CD8-positive, alpha-beta T cell (primary cell): ENCODE measurements at regions of chr4 and their contacts with region 1.

Region 1: GRCh38 chr4:30002345-30002744 is 717.8 kb upstream of the PCDH7 start:
- DNase-seq: no peak
- ATAC-seq: no peak
- H3K4me3 ChIP-seq: no peak overlapping the region
- H3K4me3 Mint-ChIP-seq: no peak overlapping the region
- H3K27ac ChIP-seq: no peak overlapping the region
- H3K27ac Mint-ChIP-seq: no peak overlapping the region
- H3K4me1 ChIP-seq: no peaks in the 10 kb centered on the region
- H3K4me1 Mint-ChIP-seq: no peaks in the 10 kb centered on the region
- H3K27me3 ChIP-seq: no peaks in the 10 kb centered on the region
- H3K27me3 Mint-ChIP-seq: no peaks in the 10 kb centered on the region
- CTCF ChIP-seq: no peak

Region 2: GRCh38 chr4:28232951-28233350 is 1769.4 kb before region 1 on chr4:
- CTCF ChIA-PET with region 1: no interaction called
- POLR2A ChIA-PET with region 1: no interaction called
- intact Hi-C with region 1: loop called in 1 of 2 experiments (anchors 5 kb)
- DNase-seq: no peak
- ATAC-seq: no peak
- H3K4me3 ChIP-seq: no peak overlapping the region
- H3K4me3 Mint-ChIP-seq: no peak overlapping the region
- H3K27ac ChIP-seq: no peak overlapping the region
- H3K27ac Mint-ChIP-seq: no peak overlapping the region
- H3K4me1 ChIP-seq: no peaks in the 10 kb centered on the region
- H3K4me1 Mint-ChIP-seq: no peaks in the 10 kb centered on the region
- H3K27me3 ChIP-seq: no peaks in the 10 kb centered on the region
- H3K27me3 Mint-ChIP-seq: no peaks in the 10 kb centered on the region
- CTCF ChIP-seq: no peak

Region 3: GRCh38 chr4:29861307-29861706 is 141.0 kb before region 1 on chr4:
- CTCF ChIA-PET with region 1: no interaction called
- POLR2A ChIA-PET with region 1: no interaction called
- intact Hi-C with region 1: no loop called
- DNase-seq: no peak
- ATAC-seq: no peak
- H3K4me3 ChIP-seq: no peak overlapping the region
- H3K4me3 Mint-ChIP-seq: no peak overlapping the region
- H3K27ac ChIP-seq: no peak overlapping the region
- H3K27ac Mint-ChIP-seq: no peak overlapping the region
- H3K4me1 ChIP-seq: no peaks in the 10 kb centered on the region
- H3K4me1 Mint-ChIP-seq: no peaks in the 10 kb centered on the region
- H3K27me3 ChIP-seq: no peaks in the 10 kb centered on the region
- H3K27me3 Mint-ChIP-seq: no peaks in the 10 kb centered on the region
- CTCF ChIP-seq: no peak

Region 4: GRCh38 chr4:30208741-30209435 is 206.5 kb after region 1 on chr4:
- CTCF ChIA-PET with region 1: no interaction called
- POLR2A ChIA-PET with region 1: no interaction called
- intact Hi-C with region 1: no loop called
- DNase-seq: no peak
- ATAC-seq: no peak
- H3K4me3 ChIP-seq: no peak overlapping the region
- H3K4me3 Mint-ChIP-seq: no peak overlapping the region
- H3K27ac ChIP-seq: no peak overlapping the region
- H3K27ac Mint-ChIP-seq: no peak overlapping the region
- H3K4me1 ChIP-seq: no peaks in the 10 kb centered on the region
- H3K4me1 Mint-ChIP-seq: no peaks in the 10 kb centered on the region
- H3K27me3 ChIP-seq: no peaks in the 10 kb centered on the region
- H3K27me3 Mint-ChIP-seq: no peaks in the 10 kb centered on the region
- CTCF ChIP-seq: no peak